Activated CD8-positive, alpha-beta T cell treated with anti-CD3 and anti-CD28 coated beads, Interleukin-2, amount 10 ng/mL, durations not matched to agents 7 days and 5 days (primary cell): ENCODE measurements at regions of chr22 and their contacts with region 1.

Region 1: GRCh38 chr22:24244101-24244787 is 638 bp downstream of the GGT5 start:
- DNase-seq: no peak
- ATAC-seq: no peak
- H3K4me3 Mint-ChIP-seq: no peak overlapping the region
- H3K27ac Mint-ChIP-seq: peak overlapping the region; percentile 82
- H3K4me1 Mint-ChIP-seq: peaks cover 55% of the 10 kb centered on the region
- H3K27me3 Mint-ChIP-seq: no peaks in the 10 kb centered on the region

Region 2: DNA sequence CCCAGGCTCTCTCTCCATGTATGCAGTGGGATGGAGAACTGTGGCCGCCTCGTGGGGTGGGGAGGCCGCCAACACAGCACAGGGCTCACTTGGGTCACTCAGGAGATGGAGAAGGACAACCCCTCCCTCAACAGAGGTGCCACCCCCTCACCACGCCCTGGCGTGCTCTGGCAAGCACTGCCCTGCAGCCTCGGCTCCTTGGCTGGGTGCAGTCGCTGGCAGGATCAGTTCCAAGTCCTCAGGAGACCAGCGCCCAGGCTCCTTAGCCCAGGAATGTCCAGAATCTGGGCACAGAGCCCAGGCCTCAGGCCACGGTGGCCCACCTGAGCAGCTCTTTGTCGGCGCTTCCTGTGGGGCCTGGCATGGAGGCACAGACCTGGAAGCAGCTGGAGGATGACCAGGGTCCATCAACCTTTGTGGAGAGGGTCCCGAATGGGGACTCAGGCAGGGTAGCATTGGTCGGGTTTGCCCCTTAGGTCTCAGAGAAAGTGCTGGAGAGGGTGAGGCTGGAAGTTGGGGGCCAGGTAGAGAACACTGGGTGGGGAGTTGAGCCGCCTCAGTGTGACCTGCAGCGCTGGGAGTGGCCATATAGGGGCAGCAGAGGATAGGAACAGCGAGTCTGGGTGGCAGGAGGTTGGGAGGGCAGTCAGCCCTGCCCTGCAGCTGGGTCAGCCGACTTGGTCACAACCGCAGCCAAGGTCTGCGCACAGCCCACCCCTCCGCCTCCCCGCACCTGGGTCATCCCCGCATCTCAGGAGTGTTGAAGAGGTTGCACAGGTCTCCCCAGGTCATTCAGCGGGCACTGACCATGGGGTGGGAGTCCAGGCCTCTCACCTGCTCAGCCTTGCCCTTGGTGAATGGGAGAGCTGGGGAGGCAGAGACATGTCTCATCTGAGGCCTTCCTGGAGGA is 54.7 kb before region 1 on chr22:
- CTCF ChIA-PET with region 1: interaction called, 12 read pairs
- POLR2A ChIA-PET with region 1: interaction called, 3 read pairs
- DNase-seq: peak; percentile 73
- ATAC-seq: peak; percentile 77
- H3K4me3 Mint-ChIP-seq: no peak overlapping the region
- H3K27ac Mint-ChIP-seq: no peak overlapping the region
- H3K4me1 Mint-ChIP-seq: peaks cover 11% of the 10 kb centered on the region
- H3K27me3 Mint-ChIP-seq: no peaks in the 10 kb centered on the region

Region 3: DNA sequence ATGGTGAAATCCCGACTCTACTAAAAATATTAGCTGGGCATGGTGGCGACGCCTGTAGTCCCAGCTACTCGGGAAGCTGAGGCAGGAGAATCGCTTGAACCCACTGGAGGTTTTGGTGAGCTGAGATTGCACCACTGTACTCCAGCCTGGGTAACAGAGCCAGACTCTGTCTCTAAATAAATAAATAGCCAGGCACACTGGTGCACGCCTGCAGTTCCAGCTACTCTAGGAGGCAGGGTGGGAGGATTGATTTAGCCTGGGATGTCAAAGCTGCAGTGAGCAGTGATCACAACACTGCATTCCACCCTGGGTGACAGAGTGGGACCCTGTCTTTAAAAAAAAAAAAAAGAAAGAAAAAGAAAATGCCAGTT is 45.6 kb before region 1 on chr22:
- CTCF ChIA-PET with region 1: interaction called, 10 read pairs
- POLR2A ChIA-PET with region 1: no interaction called
- DNase-seq: no peak
- ATAC-seq: no peak
- H3K4me3 Mint-ChIP-seq: peak overlapping the region; percentile 2
- H3K27ac Mint-ChIP-seq: peak overlapping the region; percentile 71
- H3K4me1 Mint-ChIP-seq: peaks cover 37% of the 10 kb centered on the region
- H3K27me3 Mint-ChIP-seq: no peaks in the 10 kb centered on the region

Region 4: GRCh38 chr22:24230911-24231656 is 13.2 kb before region 1 on chr22:
- CTCF ChIA-PET with region 1: interaction called, 12 read pairs
- POLR2A ChIA-PET with region 1: no interaction called
- DNase-seq: peak; percentile 75
- ATAC-seq: peak; percentile 87
- H3K4me3 Mint-ChIP-seq: no peak overlapping the region
- H3K27ac Mint-ChIP-seq: peak overlapping the region; percentile 82
- H3K4me1 Mint-ChIP-seq: peaks cover 5% of the 10 kb centered on the region
- H3K27me3 Mint-ChIP-seq: no peaks in the 10 kb centered on the region

Region 5: DNA sequence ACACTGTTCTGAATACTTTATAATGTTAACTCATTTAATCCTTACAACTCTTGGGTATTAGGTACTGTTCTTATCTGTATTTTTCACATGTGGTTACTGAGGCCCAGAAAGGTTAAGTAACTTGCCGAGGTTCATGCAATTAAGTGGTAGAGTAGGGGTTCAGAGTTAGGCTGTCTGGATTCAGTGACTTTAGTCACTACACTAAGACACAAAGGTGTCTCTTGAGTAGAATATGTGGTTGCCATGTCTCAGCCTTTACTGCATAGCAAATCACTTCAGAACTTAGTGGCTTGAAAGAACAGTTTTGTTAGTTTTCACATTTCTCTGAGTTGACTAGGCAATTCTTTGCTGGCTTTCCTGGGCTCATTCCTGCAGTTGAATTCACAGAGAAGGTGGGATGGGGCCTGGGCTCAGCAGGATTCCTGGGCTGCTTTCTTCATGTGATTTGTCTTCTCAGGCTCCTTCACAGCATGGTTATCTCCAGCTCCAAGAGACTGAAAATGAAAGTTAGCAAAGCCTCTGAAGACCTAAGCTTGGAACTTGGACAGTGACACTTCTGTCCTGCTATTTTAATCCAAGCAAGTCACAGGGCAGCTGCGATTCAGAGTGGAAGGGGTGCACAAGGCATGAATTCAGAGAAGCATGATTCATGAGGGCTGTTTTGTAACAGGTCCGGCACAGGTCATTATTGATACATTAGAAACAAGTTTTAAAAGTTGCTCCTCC is 94.6 kb after region 1 on chr22:
- CTCF ChIA-PET with region 1: no interaction called
- POLR2A ChIA-PET with region 1: no interaction called
- DNase-seq: no peak
- ATAC-seq: no peak
- H3K4me3 Mint-ChIP-seq: no peak overlapping the region
- H3K27ac Mint-ChIP-seq: no peak overlapping the region
- H3K4me1 Mint-ChIP-seq: peaks cover 21% of the 10 kb centered on the region
- H3K27me3 Mint-ChIP-seq: no peaks in the 10 kb centered on the region

Region 6: DNA sequence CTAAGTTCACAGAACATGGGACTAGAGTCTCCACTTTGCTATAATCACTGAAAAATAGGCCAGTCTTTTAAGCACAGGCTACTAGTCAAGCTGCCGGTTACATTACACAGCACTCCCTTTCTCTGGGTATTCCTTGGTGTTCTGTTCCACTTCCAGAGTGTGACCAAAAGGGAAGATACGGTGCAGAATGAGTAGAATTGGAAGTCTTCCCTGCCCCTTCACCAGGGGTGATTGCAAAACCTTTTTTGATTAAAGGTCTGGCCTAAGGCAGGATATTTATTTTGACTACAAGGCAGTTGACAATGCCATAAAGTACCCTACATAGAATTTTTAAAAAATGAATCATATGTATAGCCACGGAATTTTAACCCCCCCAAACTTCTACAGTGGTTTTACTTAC is 123.6 kb after region 1 on chr22:
- CTCF ChIA-PET with region 1: no interaction called
- POLR2A ChIA-PET with region 1: no interaction called
- DNase-seq: no peak
- ATAC-seq: no peak
- H3K4me3 Mint-ChIP-seq: no peak overlapping the region
- H3K27ac Mint-ChIP-seq: no peak overlapping the region
- H3K4me1 Mint-ChIP-seq: no peaks in the 10 kb centered on the region
- H3K27me3 Mint-ChIP-seq: no peaks in the 10 kb centered on the region